ENCODE measurements at regions of chr7 and their contacts with region 1.

Region 1: GRCh38 chr7:86469680-86470295 is 173.9 kb upstream of the GRM3 start:
- DNase-seq: peak; percentile 24
- H3K4me3 Mint-ChIP-seq: no peak overlapping the region
- H3K27ac Mint-ChIP-seq: no peak overlapping the region
- H3K4me1 Mint-ChIP-seq: no peaks in the 10 kb centered on the region
- H3K27me3 Mint-ChIP-seq: no peaks in the 10 kb centered on the region

Region 2: GRCh38 chr7:85890244-85890811 is 579.5 kb before region 1 on chr7:
- intact Hi-C with region 1: loop called (anchors 2 kb)
- DNase-seq: no peak
- H3K4me3 Mint-ChIP-seq: no peak overlapping the region
- H3K27ac Mint-ChIP-seq: no peak overlapping the region
- H3K4me1 Mint-ChIP-seq: no peaks in the 10 kb centered on the region
- H3K27me3 Mint-ChIP-seq: no peaks in the 10 kb centered on the region

Region 3: GRCh38 chr7:86130268-86130667 is 339.5 kb before region 1 on chr7:
- intact Hi-C with region 1: no loop called
- DNase-seq: no peak
- H3K4me3 Mint-ChIP-seq: no peak overlapping the region
- H3K27ac Mint-ChIP-seq: no peak overlapping the region
- H3K4me1 Mint-ChIP-seq: no peaks in the 10 kb centered on the region
- H3K27me3 Mint-ChIP-seq: no peaks in the 10 kb centered on the region

Region 4: DNA sequence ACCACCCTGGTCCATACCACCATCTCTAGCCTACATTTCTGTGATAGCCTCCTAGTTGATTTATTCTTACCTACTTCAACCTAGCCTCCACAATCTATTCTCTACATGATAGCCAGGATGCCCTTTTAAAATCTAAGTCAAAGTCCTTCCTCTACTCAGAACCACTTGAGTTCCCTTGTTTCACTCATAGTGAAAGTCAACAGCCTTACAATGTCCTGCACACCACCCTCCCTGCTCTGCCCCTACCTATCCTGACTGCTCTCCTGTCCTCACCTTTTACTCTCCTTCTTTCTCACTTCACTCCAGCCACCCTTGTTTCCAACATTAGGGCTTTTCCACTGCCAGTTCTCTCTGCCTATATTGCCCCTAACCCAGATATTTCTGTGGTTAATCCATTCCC is 320.6 kb after region 1 on chr7:
- intact Hi-C with region 1: no loop called
- DNase-seq: no peak
- H3K4me3 Mint-ChIP-seq: no peak overlapping the region
- H3K27ac Mint-ChIP-seq: no peak overlapping the region
- H3K4me1 Mint-ChIP-seq: no peaks in the 10 kb centered on the region
- H3K27me3 Mint-ChIP-seq: no peaks in the 10 kb centered on the region

Region 5: DNA sequence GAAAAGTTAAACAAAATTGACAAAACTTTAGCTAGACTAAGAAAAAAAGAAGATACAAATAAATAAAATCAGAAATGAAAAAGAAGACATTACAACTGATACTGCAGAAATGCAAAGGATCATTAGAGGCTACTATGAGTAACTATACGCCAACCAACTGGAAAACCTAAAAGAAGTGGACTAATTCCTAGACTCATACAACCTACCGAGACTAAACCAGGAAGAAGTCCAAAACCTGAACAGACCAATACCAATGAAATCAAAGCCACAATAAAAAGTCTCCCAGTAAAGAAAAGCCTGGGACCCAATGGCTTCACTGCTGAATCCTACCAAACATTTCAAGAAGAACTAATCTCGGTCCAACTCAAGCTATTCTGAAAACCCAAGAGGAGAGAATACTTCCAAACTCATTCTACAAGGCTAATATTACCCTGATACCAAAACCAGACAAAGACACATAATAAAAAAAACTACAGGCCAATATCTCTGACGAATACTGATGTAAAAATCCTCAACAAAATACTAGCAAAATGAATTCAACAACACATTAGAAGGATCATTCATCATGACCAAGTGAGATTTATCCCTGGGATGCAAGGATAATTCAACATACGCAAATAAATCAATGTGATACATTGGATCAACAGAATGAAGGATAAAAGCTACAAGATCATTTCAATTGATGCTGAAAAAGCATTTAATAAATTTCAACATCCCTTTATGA is 569.4 kb after region 1 on chr7:
- intact Hi-C with region 1: no loop called
- DNase-seq: no peak
- H3K4me3 Mint-ChIP-seq: peak overlapping the region; percentile 70
- H3K27ac Mint-ChIP-seq: peak overlapping the region; percentile 18
- H3K4me1 Mint-ChIP-seq: no peaks in the 10 kb centered on the region
- H3K27me3 Mint-ChIP-seq: no peaks in the 10 kb centered on the region

Measured in activated T-helper 2 cell treated with anti-CD3 and anti-CD28 coated beads, Interferon-gamma antibody, Interleukin-2, Interleukin-4, amounts not matched to agents 10 μg/mL and 5 μg/mL and 100 μg/mL, durations not matched to agents 14 hours and 24 hours and 36 hours (primary cell).